CD14-positive monocyte (primary cell): ENCODE measurements at regions of chr2 and their contacts with region 1.

Region 1: DNA sequence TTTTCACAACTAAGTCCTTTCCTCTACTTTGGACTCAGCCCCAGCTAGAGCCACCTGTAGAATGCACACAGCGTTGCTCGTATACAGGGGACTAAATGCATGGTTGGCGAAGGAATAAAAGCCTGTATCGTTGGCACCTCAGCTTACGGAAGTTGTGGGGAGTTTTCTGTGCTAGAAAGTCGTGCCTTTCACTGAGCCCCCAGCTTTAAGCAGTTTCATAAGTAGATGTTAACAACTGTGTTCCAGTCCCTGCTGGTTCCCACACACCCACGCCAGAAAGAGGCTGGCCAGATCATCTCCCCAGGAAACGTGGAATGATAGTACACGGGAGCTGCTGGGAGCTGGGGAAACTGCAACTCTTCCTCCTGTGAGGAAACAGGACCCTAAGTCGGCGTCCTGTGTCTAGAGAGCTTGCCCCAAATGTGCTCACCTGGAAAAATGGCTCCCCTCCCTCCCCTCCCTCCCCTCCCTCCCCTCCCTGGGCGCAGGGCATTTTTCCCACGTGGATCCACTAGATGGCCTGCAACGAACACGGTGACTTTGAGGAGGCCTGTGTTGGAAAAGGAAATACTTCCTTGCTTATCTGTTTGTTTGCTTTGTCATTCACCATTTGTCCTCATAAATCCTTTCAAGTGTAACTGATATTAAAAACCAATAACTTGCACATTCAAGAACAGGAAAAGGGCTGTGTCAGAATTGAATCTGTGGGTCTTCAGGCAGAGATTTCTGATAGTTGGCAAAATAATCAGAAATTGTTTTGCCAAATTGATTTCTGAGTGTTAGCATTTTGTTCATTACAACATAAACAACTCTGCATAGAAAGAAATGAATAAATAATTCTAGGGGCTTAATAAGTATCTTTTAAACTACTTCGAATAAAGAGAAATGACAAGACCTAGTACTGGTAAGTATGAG is 43.9 kb upstream of the RFX8 start:
- DNase-seq: no peak
- H3K4me3 ChIP-seq: no peak overlapping the region
- H3K4me3 Mint-ChIP-seq: peak overlapping the region in 1 of 2 donors; percentile 53
- H3K27ac ChIP-seq: no peak overlapping the region
- H3K27ac Mint-ChIP-seq: peak overlapping the region in 1 of 7 donors; percentile 87
- H3K4me1 ChIP-seq: peaks cover 44 to 53% of the 10 kb centered on the region in 2 donors
- H3K4me1 Mint-ChIP-seq: peaks cover 52% of the 10 kb centered on the region
- H3K27me3 ChIP-seq: peaks cover 0 to 3% of the 10 kb centered on the region in 2 donors
- H3K27me3 Mint-ChIP-seq: peaks cover 2 to 19% (median 7%) of the 10 kb centered on the region in 3 donors
- CTCF ChIP-seq: no peak

Region 2: GRCh38 chr2:101405351-101405899 is 113.4 kb before region 1 on chr2:
- intact Hi-C with region 1: no loop called
- DNase-seq: peak; percentile 35 to 66 (median 61)
- H3K4me3 ChIP-seq: peak overlapping the region in 1 of 3 experiments; percentile 14
- H3K4me3 Mint-ChIP-seq: peak overlapping the region in 1 of 2 donors; percentile 67
- H3K27ac ChIP-seq: no peak overlapping the region
- H3K27ac Mint-ChIP-seq: peak overlapping the region; percentile 5 to 76 (median 59)
- H3K4me1 ChIP-seq: peaks cover 31 to 36% of the 10 kb centered on the region in 2 donors
- H3K4me1 Mint-ChIP-seq: peaks cover 38% of the 10 kb centered on the region
- H3K27me3 ChIP-seq: no peaks in the 10 kb centered on the region
- H3K27me3 Mint-ChIP-seq: peaks cover 1 to 13% (median 11%) of the 10 kb centered on the region in 3 donors
- CTCF ChIP-seq: no peak

Region 3: GRCh38 chr2:101419096-101419663 is 99.7 kb before region 1 on chr2:
- intact Hi-C with region 1: loop called in 1 of 2 experiments (anchors 5 kb)
- DNase-seq: peak; percentile 51 to 73 (median 72)
- H3K4me3 ChIP-seq: no peak overlapping the region
- H3K4me3 Mint-ChIP-seq: no peak overlapping the region
- H3K27ac ChIP-seq: no peak overlapping the region
- H3K27ac Mint-ChIP-seq: peak overlapping the region in 1 of 7 donors; percentile 44
- H3K4me1 ChIP-seq: peaks cover 9 to 10% of the 10 kb centered on the region in 2 donors
- H3K4me1 Mint-ChIP-seq: peaks cover 12% of the 10 kb centered on the region
- H3K27me3 ChIP-seq: no peaks in the 10 kb centered on the region
- H3K27me3 Mint-ChIP-seq: peaks cover 0 to 1% (median 0%) of the 10 kb centered on the region in 3 donors
- CTCF ChIP-seq: peak; percentile 79

Region 4: GRCh38 chr2:101446869-101447268 is 72.0 kb before region 1 on chr2:
- intact Hi-C with region 1: loop called in 1 of 2 experiments (anchors 1 kb)
- DNase-seq: peak; percentile 82 to 94 (median 88)
- H3K4me3 ChIP-seq: no peak overlapping the region
- H3K4me3 Mint-ChIP-seq: peak overlapping the region in 1 of 2 donors; percentile 72
- H3K27ac ChIP-seq: no peak overlapping the region
- H3K27ac Mint-ChIP-seq: peak overlapping the region; percentile 8 to 87 (median 64)
- H3K4me1 ChIP-seq: peaks cover 20 to 25% of the 10 kb centered on the region in 2 donors
- H3K4me1 Mint-ChIP-seq: peaks cover 31% of the 10 kb centered on the region
- H3K27me3 ChIP-seq: peaks cover 3 to 19% of the 10 kb centered on the region in 2 donors
- H3K27me3 Mint-ChIP-seq: peaks cover 24 to 44% (median 42%) of the 10 kb centered on the region in 3 donors
- CTCF ChIP-seq: no peak

Region 5: GRCh38 chr2:101463891-101464641 is 54.8 kb before region 1 on chr2:
- intact Hi-C with region 1: loop called in 1 of 2 experiments (anchors 10 kb)
- DNase-seq: peak; percentile 81 to 98 (median 90)
- H3K4me3 ChIP-seq: no peak overlapping the region
- H3K4me3 Mint-ChIP-seq: peak overlapping the region in 1 of 2 donors; percentile 47
- H3K27ac ChIP-seq: peak overlapping the region; percentile 26 to 39
- H3K27ac Mint-ChIP-seq: peak overlapping the region; percentile 12 to 91 (median 74)
- H3K4me1 ChIP-seq: peaks cover 45 to 52% of the 10 kb centered on the region in 2 donors
- H3K4me1 Mint-ChIP-seq: peaks cover 54% of the 10 kb centered on the region
- H3K27me3 ChIP-seq: peaks cover 23 to 27% of the 10 kb centered on the region in 2 donors
- H3K27me3 Mint-ChIP-seq: peaks cover 37 to 74% (median 73%) of the 10 kb centered on the region in 3 donors
- CTCF ChIP-seq: no peak

Region 6: DNA sequence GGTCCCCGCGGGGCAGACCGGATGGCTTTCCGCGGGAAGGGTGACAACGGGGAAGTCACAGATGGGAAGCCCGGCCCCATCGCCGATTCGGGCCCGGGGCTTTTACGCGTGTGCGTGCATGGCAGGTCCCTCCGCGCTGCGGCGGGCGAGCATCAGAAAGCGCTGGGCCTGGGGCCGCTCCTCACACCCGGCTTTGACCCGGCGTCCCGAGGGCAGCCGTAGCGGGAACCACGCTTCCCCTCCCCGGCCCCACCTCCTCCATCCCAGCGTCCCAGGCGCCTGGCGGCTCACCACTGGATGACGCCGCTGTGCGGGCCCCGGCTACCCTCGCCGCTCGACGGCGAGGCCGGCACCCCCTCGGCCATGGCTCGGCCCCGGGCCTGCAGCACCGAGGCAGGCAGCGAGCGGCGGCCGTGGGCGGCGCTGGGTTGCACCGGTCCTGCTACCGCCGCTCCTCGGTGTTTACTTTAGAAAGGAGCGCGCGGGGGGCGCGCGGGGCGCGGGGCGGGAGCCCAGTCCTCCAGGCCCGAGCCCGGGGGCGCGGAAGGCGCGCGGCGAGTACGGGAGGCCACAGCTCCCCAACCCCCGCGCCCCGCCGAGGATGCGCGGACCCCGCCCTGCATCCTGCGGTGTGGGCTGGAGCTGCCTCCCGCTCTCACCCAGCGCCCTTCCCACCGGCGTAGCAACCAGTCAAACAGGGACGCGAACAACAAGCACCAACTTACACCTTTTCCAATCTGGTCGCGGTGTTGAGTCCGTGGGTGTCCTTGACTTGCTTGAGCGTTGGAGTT is 44.7 kb before region 1 on chr2:
- intact Hi-C with region 1: loop called (anchors 5 to 10 kb)
- DNase-seq: peak; percentile 35 to 63 (median 44)
- H3K4me3 ChIP-seq: peak overlapping the region; percentile 26 to 73 (median 42)
- H3K4me3 Mint-ChIP-seq: peak overlapping the region; percentile 79 to 89
- H3K27ac ChIP-seq: no peak overlapping the region
- H3K27ac Mint-ChIP-seq: peak overlapping the region in 5 of 7 donors; percentile 5 to 81 (median 46)
- H3K4me1 ChIP-seq: peaks cover 35 to 45% of the 10 kb centered on the region in 2 donors
- H3K4me1 Mint-ChIP-seq: peaks cover 46% of the 10 kb centered on the region
- H3K27me3 ChIP-seq: peaks cover 54 to 55% of the 10 kb centered on the region in 2 donors
- H3K27me3 Mint-ChIP-seq: peaks cover 60 to 82% (median 77%) of the 10 kb centered on the region in 3 donors
- CTCF ChIP-seq: no peak

Region 7: GRCh38 chr2:101486258-101486701 is 32.6 kb before region 1 on chr2:
- intact Hi-C with region 1: no loop called
- DNase-seq: no peak
- H3K4me3 ChIP-seq: no peak overlapping the region
- H3K4me3 Mint-ChIP-seq: peak overlapping the region in 1 of 2 donors; percentile 44
- H3K27ac ChIP-seq: no peak overlapping the region
- H3K27ac Mint-ChIP-seq: no peak overlapping the region
- H3K4me1 ChIP-seq: no peaks in the 10 kb centered on the region
- H3K4me1 Mint-ChIP-seq: no peaks in the 10 kb centered on the region
- H3K27me3 ChIP-seq: no peaks in the 10 kb centered on the region
- H3K27me3 Mint-ChIP-seq: peaks cover 25 to 31% (median 25%) of the 10 kb centered on the region in 3 donors
- CTCF ChIP-seq: no peak

Region 8: GRCh38 chr2:101533561-101534148 is 14.8 kb after region 1 on chr2:
- intact Hi-C with region 1: loop called in 1 of 2 experiments (anchors 1 kb)
- DNase-seq: no peak
- H3K4me3 ChIP-seq: no peak overlapping the region
- H3K4me3 Mint-ChIP-seq: peak overlapping the region in 1 of 2 donors; percentile 60
- H3K27ac ChIP-seq: peak overlapping the region in 1 of 2 donors; percentile 33
- H3K27ac Mint-ChIP-seq: peak overlapping the region; percentile 40 to 88 (median 86)
- H3K4me1 ChIP-seq: peaks cover 19% of the 10 kb centered on the region in 2 donors
- H3K4me1 Mint-ChIP-seq: peaks cover 19% of the 10 kb centered on the region
- H3K27me3 ChIP-seq: no peaks in the 10 kb centered on the region
- H3K27me3 Mint-ChIP-seq: peaks cover 0 to 6% (median 3%) of the 10 kb centered on the region in 3 donors
- CTCF ChIP-seq: no peak

Region 9: GRCh38 chr2:101623031-101623521 is 104.2 kb after region 1 on chr2:
- intact Hi-C with region 1: loop called in 1 of 2 experiments (anchors 5 kb)
- DNase-seq: peak; percentile 86 to 95 (median 94)
- H3K4me3 ChIP-seq: peak overlapping the region in 1 of 3 experiments; percentile 37
- H3K4me3 Mint-ChIP-seq: peak overlapping the region in 1 of 2 donors; percentile 79
- H3K27ac ChIP-seq: peak overlapping the region in 1 of 2 donors; percentile 73
- H3K27ac Mint-ChIP-seq: peak overlapping the region; percentile 72 to 96 (median 89)
- H3K4me1 ChIP-seq: peaks cover 87% of the 10 kb centered on the region in 2 donors
- H3K4me1 Mint-ChIP-seq: peaks cover 84% of the 10 kb centered on the region
- H3K27me3 ChIP-seq: no peaks in the 10 kb centered on the region
- H3K27me3 Mint-ChIP-seq: peaks cover 16 to 23% (median 21%) of the 10 kb centered on the region in 3 donors
- CTCF ChIP-seq: no peak